ENCODE measurements at regions of chr16 and their contacts with region 1.

Region 1: DNA sequence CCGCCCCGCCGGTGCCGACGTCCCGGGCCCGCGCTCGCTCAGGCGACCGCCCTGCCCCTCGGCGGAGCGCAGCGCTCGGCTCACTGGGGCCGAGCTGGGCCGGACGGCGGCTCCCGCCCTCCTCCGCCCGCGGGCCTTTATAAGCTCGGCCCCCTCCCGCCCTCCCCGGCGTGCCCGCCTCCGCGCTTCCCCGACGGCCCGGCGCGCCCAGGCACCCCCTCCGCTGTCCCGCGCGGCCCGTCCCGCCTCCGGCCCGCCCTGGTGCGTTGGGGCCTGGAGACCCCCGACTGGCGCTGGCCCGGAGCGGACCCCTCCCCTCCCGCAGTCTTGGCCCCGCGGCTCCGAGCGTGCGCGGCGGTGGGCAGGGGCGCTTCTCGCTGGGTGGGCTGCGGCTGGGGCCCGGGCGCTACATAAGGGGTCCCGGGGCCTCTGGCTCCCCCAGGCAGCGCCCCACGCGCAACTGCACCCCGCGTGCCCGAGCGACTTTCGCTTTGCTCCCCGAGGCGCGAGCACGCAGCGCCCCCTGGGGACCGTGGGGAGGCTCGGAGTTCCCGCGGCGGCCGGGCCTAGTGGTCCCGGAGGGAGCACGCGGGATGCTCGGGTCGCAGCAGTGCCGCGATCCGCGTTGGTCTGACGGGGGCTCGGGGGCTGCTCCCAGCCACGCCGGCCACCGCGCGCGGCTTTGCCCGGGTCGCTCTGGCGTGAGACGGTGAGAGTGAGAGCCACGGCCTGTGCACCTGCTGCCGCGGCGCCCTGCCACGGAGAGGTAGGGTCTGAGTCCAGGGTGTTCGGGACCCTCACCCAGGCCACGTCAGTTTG is at the start of gene PIEZO1:
- H3K4me3 Mint-ChIP-seq: peak within 1 kb of the TSS; percentile 87
- H3K27ac Mint-ChIP-seq: peak within 1 kb of the TSS; percentile 93
- H3K4me1 Mint-ChIP-seq: peaks cover 51% of the 10 kb centered on the region
- H3K27me3 Mint-ChIP-seq: no peaks in the 10 kb centered on the region

Region 2: GRCh38 chr16:88737298-88738150 is 47.8 kb before region 1 on chr16:
- intact Hi-C with region 1: loop called (anchors 2 kb)
- H3K4me3 Mint-ChIP-seq: no peak overlapping the region
- H3K27ac Mint-ChIP-seq: no peak overlapping the region
- H3K4me1 Mint-ChIP-seq: peaks cover 5% of the 10 kb centered on the region
- H3K27me3 Mint-ChIP-seq: no peaks in the 10 kb centered on the region

Region 3: DNA sequence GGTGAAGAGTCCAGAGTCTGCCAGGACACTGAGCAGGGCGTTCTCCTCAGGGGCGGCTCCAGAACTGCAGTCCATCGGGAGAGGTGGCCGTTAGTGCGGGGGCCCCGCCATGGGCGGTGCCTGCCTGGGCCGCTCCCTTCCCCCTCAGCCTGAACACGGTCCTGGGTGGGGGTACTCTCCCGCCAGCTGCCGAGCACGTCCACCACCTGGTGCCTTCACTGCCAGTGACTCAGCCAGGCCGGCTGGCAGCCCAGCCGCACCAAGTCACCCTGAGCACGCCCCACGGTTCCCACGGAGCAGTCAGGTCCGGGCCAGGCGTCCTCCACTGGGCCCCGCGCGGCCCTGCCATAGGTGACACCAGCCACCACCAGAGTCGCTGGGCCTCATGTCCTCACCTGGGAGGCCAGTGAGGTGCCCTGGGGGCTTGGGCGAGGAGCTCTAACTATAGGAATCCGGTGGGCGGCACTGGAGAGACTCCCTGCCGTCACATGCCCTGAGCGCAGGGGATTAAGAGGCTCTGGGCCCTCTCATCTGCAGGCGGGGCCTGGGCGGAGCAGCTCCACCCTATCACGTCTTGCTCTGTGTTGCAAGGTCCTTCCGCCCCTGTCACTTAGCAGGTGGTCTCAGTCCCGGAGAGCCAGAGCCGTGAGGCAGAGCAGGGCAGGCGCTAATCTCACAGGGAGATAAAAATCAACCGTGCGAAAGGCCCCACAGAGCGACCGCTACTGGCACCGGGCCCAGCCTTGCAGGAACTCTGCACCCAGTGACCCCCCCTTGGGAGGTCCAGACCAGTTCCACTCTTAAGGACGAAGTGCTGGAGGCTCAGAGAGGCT is 14.6 kb before region 1 on chr16:
- intact Hi-C with region 1: loop called (anchors 1 kb)
- H3K4me3 Mint-ChIP-seq: peak overlapping the region; percentile 48
- H3K27ac Mint-ChIP-seq: peak overlapping the region; percentile 31
- H3K4me1 Mint-ChIP-seq: peaks cover 98% of the 10 kb centered on the region
- H3K27me3 Mint-ChIP-seq: no peaks in the 10 kb centered on the region

Region 4: DNA sequence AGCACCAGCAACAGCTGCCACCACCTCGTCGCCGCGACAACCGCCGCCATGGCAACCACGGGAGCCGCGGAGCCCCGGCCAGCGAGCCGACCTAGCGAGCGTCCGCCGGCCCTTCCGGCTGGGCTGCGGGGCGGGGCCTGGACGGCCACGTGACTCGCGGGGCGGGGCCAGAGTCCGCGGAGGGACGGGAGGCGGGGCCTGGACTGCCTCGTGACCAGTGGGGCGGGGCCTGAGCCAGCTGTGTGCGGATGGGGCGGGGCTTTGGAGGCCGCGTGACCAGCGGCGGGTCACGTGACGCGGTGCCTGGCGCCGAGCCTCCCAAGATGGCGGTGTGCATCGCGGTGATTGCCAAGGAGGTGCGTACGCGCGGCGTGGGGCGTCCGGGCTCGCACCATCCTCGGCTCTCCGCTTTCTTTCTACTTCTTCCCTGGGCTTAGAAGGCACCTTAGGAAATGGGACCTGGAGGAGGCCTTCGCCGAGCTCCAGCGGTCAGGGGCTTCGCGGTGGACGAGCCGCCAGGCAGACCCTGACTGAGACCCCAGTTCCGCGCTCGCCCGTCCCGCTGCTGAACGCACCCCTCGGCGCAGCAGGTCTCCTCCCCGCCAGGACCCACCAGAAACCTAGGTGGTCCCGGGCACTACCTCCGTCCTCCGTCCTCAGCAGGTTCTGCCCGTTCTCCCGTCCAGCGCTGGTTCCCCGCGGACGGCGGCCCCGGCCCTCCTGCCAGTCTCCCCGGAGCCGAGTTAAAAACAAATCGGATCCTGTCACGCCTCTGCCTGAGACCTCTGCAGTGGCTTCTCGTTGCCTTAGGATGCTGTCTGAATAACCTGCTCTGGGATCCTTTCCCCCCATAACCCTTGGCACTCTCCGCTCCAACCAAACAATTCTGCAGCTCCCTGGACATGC is 71.8 kb after region 1 on chr16 and contains the starts of genes GALNS and TRAPPC2L:
- intact Hi-C with region 1: loop called (anchors 2 kb)
- H3K4me3 Mint-ChIP-seq: peak within 1 kb of the TSS; percentile 90
- H3K27ac Mint-ChIP-seq: peak within 1 kb of the TSS; percentile 83
- H3K4me1 Mint-ChIP-seq: peaks cover 62% of the 10 kb centered on the region
- H3K27me3 Mint-ChIP-seq: no peaks in the 10 kb centered on the region